CD4-positive, alpha-beta T cell (primary cell): ENCODE measurements at regions of chr19 and their contacts with region 1.

Region 1: GRCh38 chr19:5977785-5978605 is at the start of gene RANBP3:
- DNase-seq: peak; percentile 95 to 100 (median 99)
- ATAC-seq: peak; percentile 92
- H3K4me3 ChIP-seq: peak within 1 kb of the TSS; percentile 95
- H3K4me3 Mint-ChIP-seq: peak within 1 kb of the TSS; percentile 100
- H3K27ac ChIP-seq: peak within 1 kb of the TSS; percentile 78 to 85
- H3K27ac Mint-ChIP-seq: peak within 1 kb of the TSS; percentile 94
- H3K4me1 ChIP-seq: peaks cover 66% of the 10 kb centered on the region
- H3K4me1 Mint-ChIP-seq: peaks cover 52% of the 10 kb centered on the region
- H3K27me3 ChIP-seq: no peaks in the 10 kb centered on the region
- H3K27me3 Mint-ChIP-seq: no peaks in the 10 kb centered on the region
- CTCF ChIP-seq: no peak
- total RNA-seq, gene RANBP3: 82.7 to 88.7 TPM

Region 2: GRCh38 chr19:5690125-5690954 is 287.7 kb before region 1 on chr19 and contains the start of gene RPL36:
- CTCF ChIA-PET with region 1: no interaction called
- POLR2A ChIA-PET with region 1: no interaction called
- intact Hi-C with region 1: loop called in 1 of 2 experiments (anchors 10 kb)
- DNase-seq: peak; percentile 95 to 100 (median 99)
- ATAC-seq: peak; percentile 65
- H3K4me3 ChIP-seq: peak within 1 kb of the TSS; percentile 100
- H3K4me3 Mint-ChIP-seq: peak within 1 kb of the TSS; percentile 96
- H3K27ac ChIP-seq: peak within 1 kb of the TSS; percentile 91 to 95
- H3K27ac Mint-ChIP-seq: peak within 1 kb of the TSS; percentile 96
- H3K4me1 ChIP-seq: peaks cover 54% of the 10 kb centered on the region
- H3K4me1 Mint-ChIP-seq: peaks cover 43% of the 10 kb centered on the region
- H3K27me3 ChIP-seq: no peaks in the 10 kb centered on the region
- H3K27me3 Mint-ChIP-seq: no peaks in the 10 kb centered on the region
- CTCF ChIP-seq: peak; percentile 98
- total RNA-seq, gene RPL36: 1,509 to 1,565 TPM

Region 3: GRCh38 chr19:5790573-5791520 is 187.1 kb before region 1 on chr19 and contains the start of gene DUS3L:
- CTCF ChIA-PET with region 1: no interaction called
- POLR2A ChIA-PET with region 1: no interaction called
- intact Hi-C with region 1: no loop called
- DNase-seq: peak; percentile 91 to 99 (median 94)
- ATAC-seq: peak; percentile 93
- H3K4me3 ChIP-seq: peak within 1 kb of the TSS; percentile 69
- H3K4me3 Mint-ChIP-seq: peak within 1 kb of the TSS; percentile 96
- H3K27ac ChIP-seq: peak within 1 kb of the TSS; percentile 96 to 97
- H3K27ac Mint-ChIP-seq: peak within 1 kb of the TSS; percentile 97
- H3K4me1 ChIP-seq: peaks cover 26% of the 10 kb centered on the region
- H3K4me1 Mint-ChIP-seq: peaks cover 15% of the 10 kb centered on the region
- H3K27me3 ChIP-seq: no peaks in the 10 kb centered on the region
- H3K27me3 Mint-ChIP-seq: no peaks in the 10 kb centered on the region
- CTCF ChIP-seq: no peak
- total RNA-seq, gene DUS3L: 150 to 170 TPM

Region 4: GRCh38 chr19:5827891-5828660 is 149.9 kb before region 1 on chr19:
- CTCF ChIA-PET with region 1: no interaction called
- POLR2A ChIA-PET with region 1: interaction called, 12 read pairs
- intact Hi-C with region 1: loop called in 1 of 2 experiments (anchors 5 kb)
- DNase-seq: peak; percentile 85 to 98 (median 92)
- ATAC-seq: peak; percentile 81
- H3K4me3 ChIP-seq: peak overlapping the region; percentile 86
- H3K4me3 Mint-ChIP-seq: peak overlapping the region; percentile 98
- H3K27ac ChIP-seq: peak overlapping the region; percentile 69 to 86
- H3K27ac Mint-ChIP-seq: peak overlapping the region; percentile 95
- H3K4me1 ChIP-seq: peaks cover 31% of the 10 kb centered on the region
- H3K4me1 Mint-ChIP-seq: peaks cover 18% of the 10 kb centered on the region
- H3K27me3 ChIP-seq: peaks cover 0 to 3% of the 10 kb centered on the region in 2 experiments
- H3K27me3 Mint-ChIP-seq: no peaks in the 10 kb centered on the region
- CTCF ChIP-seq: no peak